ENCODE measurements at regions of chr10 and their contacts with region 1.

Region 1: GRCh38 chr10:2980791-2981360 is 86.5 kb upstream of the PFKP start:
- DNase-seq: no peak
- ATAC-seq: no peak
- H3K4me3 ChIP-seq: no peak overlapping the region
- H3K27ac ChIP-seq: no peak overlapping the region
- H3K4me1 ChIP-seq: no peaks in the 10 kb centered on the region
- H3K27me3 ChIP-seq: peaks cover 0 to 15% (median 4%) of the 10 kb centered on the region in 9 donors
- CTCF ChIP-seq: no peak
- POLR2A ChIP-seq: no peak

Region 2: DNA sequence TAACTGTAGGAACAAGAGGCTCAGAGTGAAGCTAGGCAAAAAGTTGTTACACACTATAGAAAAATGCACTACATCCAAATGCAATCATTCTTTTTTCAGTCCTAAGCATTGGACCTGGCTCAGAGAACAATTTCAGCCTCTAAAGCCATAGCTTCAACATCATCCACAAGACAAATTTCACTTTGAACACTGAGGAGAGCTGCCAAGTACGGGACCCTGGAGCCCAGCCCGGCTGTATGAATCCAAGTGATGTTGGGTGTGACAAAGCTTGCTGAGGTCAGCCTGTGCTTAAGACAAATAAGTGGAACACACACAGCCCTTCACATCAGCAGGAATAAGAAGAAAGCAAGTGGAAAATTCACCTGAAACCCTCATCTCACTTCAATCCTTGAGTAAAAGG is 146.7 kb before region 1 on chr10:
- intact Hi-C with region 1: no loop called
- DNase-seq: no peak
- ATAC-seq: no peak
- H3K4me3 ChIP-seq: no peak overlapping the region
- H3K27ac ChIP-seq: no peak overlapping the region
- H3K4me1 ChIP-seq: no peaks in the 10 kb centered on the region
- H3K27me3 ChIP-seq: peaks cover 0 to 18% (median 0%) of the 10 kb centered on the region in 9 donors
- CTCF ChIP-seq: no peak
- POLR2A ChIP-seq: no peak

Region 3: GRCh38 chr10:3020311-3020710 is 39.4 kb after region 1 on chr10:
- intact Hi-C with region 1: loop called in 1 of 10 experiments (anchors 5 kb)
- DNase-seq: no peak
- ATAC-seq: peak in 1 of 4 donors; percentile 27
- H3K4me3 ChIP-seq: no peak overlapping the region
- H3K27ac ChIP-seq: no peak overlapping the region
- H3K4me1 ChIP-seq: no peaks in the 10 kb centered on the region
- H3K27me3 ChIP-seq: no peaks in the 10 kb centered on the region
- CTCF ChIP-seq: no peak
- POLR2A ChIP-seq: no peak

Region 4: GRCh38 chr10:3231951-3232730 is 251.3 kb after region 1 on chr10:
- intact Hi-C with region 1: no loop called
- DNase-seq: no peak
- ATAC-seq: peak in 2 of 4 donors; percentile 35 to 79
- H3K4me3 ChIP-seq: no peak overlapping the region
- H3K27ac ChIP-seq: no peak overlapping the region
- H3K4me1 ChIP-seq: peaks cover 0 to 15% (median 5%) of the 10 kb centered on the region in 12 donors
- H3K27me3 ChIP-seq: no peaks in the 10 kb centered on the region
- CTCF ChIP-seq: peak in 4 of 12 donors; percentile 5 to 21 (median 20)
- POLR2A ChIP-seq: no peak

Measured in heart left ventricle (tissue), 16 donors.